ENCODE measurements at regions of chr12 and their contacts with region 1.

Region 1: GRCh38 chr12:31238764-31239387 is 87.1 kb downstream of the SINHCAF start:
- DNase-seq: peak; percentile 62 to 87 (median 70)
- H3K4me3 ChIP-seq: no peak overlapping the region
- H3K27ac ChIP-seq: no peak overlapping the region
- H3K4me1 ChIP-seq: no peaks in the 10 kb centered on the region
- H3K27me3 ChIP-seq: peaks cover 4% of the 10 kb centered on the region
- CTCF ChIP-seq: peak; percentile 40 to 73 (median 60)
- POLR2A ChIP-seq: no peak

Region 2: DNA sequence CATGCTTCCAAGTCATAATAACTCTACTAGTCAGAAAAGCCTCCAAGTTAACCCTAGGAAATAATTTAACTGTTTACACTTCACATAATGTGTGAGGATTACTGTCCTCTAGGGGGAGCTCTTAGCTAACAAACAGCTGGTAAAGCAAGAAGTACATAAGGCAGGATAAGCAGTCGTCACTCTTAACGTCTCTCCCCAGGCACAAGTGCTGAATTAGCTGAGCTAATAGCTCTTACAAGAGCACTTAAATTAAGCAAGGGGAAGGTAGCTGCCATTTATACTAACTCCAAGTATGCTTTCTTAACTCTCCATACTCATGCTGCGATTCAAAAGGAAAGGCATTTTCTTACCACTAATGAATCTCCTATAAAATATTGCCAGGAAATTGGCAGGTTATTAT is 391.6 kb before region 1 on chr12:
- intact Hi-C with region 1: loop called in 1 of 2 experiments (anchors 5 kb)
- DNase-seq: peak in 1 of 7 donors; percentile 21
- H3K4me3 ChIP-seq: no peak overlapping the region
- H3K27ac ChIP-seq: no peak overlapping the region
- H3K4me1 ChIP-seq: peaks cover 0 to 3% of the 10 kb centered on the region in 2 donors
- H3K27me3 ChIP-seq: no peaks in the 10 kb centered on the region
- CTCF ChIP-seq: peak; percentile 54 to 76 (median 69)
- POLR2A ChIP-seq: no peak

Region 3: DNA sequence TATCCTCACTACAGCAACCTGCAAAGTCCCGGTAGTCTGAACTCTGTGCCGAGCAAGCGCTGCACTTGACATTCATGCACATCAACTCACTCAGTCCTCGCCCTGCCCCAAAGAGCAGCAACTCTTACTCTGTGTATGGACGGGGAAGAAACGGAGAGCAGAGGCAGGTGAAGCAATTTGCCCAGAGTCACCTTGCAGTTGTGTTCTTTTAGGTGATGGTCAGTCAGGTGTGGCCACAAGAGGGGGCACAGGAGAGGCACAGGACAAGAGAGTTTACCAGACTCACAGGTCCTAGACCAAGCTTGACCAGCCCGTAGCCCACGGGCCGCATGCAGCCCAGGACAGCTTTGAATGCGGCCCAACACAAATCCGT is 273.3 kb before region 1 on chr12:
- intact Hi-C with region 1: no loop called
- DNase-seq: no peak
- H3K4me3 ChIP-seq: no peak overlapping the region
- H3K27ac ChIP-seq: no peak overlapping the region
- H3K4me1 ChIP-seq: no peaks in the 10 kb centered on the region
- H3K27me3 ChIP-seq: no peaks in the 10 kb centered on the region
- CTCF ChIP-seq: no peak
- POLR2A ChIP-seq: no peak

Region 4: DNA sequence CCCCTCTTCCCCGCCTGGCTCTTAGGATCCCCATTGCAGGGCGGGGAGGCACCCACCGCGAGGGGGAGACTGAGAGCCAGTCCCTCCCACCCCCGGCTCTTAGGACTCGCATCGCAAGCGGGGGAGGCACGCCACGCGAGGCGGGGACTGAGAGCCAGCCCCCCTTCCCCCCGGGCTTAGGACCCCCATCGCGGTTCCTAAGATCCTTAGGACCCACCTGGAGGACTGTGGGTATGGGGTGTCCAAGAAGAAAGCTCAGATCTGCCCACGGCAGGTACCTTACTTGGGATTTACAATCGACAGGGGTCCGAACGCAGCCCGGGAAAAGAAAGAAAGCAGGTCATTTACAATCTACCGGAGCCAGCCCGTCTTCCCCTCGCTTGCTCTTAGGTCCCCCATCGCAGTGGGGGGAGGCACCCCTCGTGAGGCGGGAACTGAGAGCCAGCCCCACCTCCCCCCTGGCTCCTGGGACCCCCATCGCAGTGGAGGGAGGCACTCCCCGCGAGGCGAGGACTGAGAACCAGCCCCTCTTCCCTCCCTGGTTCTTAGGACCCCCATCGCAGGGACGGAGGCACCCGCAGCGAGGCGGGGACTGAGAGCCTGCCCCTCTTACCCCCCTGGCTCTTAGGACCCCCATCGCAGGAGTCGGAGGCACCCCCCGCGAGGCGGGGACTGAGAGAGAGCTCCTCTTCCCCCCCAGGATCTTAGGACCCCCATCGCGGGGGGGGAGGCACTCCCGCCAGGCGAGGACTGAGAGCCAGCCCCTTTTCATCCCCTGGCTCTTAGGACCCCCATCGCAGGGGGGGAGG is 121.5 kb before region 1 on chr12:
- intact Hi-C with region 1: no loop called
- DNase-seq: peak in 1 of 7 donors; percentile 49
- H3K4me3 ChIP-seq: peak overlapping the region in 1 of 4 donors; percentile 40
- H3K27ac ChIP-seq: no peak overlapping the region
- H3K4me1 ChIP-seq: peaks cover 0 to 7% of the 10 kb centered on the region in 2 donors
- H3K27me3 ChIP-seq: peaks cover 10% of the 10 kb centered on the region
- CTCF ChIP-seq: peak in 3 of 6 experiments; percentile 22 to 31 (median 31)
- POLR2A ChIP-seq: no peak